ENCODE measurements at regions of chr11 and their contacts with region 1.

Region 1: GRCh38 chr11:118002541-118003423 is 16.6 kb downstream of the IL10RA start:
- DNase-seq: peak in 10 of 14 experiments; percentile 29 to 70 (median 48)
- ATAC-seq: peak; percentile 48
- H3K4me3 ChIP-seq: peak overlapping the region; percentile 10
- H3K4me3 Mint-ChIP-seq: peak overlapping the region; percentile 82
- H3K27ac ChIP-seq: peak overlapping the region; percentile 72 to 76
- H3K27ac Mint-ChIP-seq: peak overlapping the region; percentile 84
- H3K4me1 ChIP-seq: peaks cover 99% of the 10 kb centered on the region
- H3K4me1 Mint-ChIP-seq: peaks cover 92% of the 10 kb centered on the region
- H3K27me3 ChIP-seq: no peaks in the 10 kb centered on the region
- H3K27me3 Mint-ChIP-seq: no peaks in the 10 kb centered on the region
- CTCF ChIP-seq: no peak

Region 2: DNA sequence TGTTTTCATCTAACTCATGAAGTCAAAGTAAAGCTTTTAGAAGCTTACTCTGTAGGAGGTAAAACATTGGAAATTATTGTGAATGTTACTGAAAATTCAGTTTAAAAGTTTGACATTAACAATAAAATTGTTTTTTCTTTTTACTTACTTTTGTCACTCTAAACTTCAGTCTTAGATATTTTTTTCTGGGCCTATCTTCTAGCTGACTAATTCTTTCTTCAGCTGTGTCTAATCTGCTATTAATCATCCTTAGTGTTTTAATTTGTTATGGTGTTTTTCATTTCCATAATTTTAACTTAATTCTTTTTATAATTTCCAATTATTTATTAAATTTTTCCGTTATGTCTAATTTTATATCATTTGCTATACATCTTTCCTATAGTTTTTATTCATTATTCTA is 18.4 kb after region 1 on chr11:
- CTCF ChIA-PET with region 1: interaction called, 3 read pairs
- POLR2A ChIA-PET with region 1: interaction called, 10 read pairs
- intact Hi-C with region 1: no loop called
- DNase-seq: no peak
- ATAC-seq: no peak
- H3K4me3 ChIP-seq: no peak overlapping the region
- H3K4me3 Mint-ChIP-seq: no peak overlapping the region
- H3K27ac ChIP-seq: no peak overlapping the region
- H3K27ac Mint-ChIP-seq: no peak overlapping the region
- H3K4me1 ChIP-seq: peaks cover 9% of the 10 kb centered on the region
- H3K4me1 Mint-ChIP-seq: peaks cover 19% of the 10 kb centered on the region
- H3K27me3 ChIP-seq: no peaks in the 10 kb centered on the region
- H3K27me3 Mint-ChIP-seq: no peaks in the 10 kb centered on the region
- CTCF ChIP-seq: no peak

Region 3: DNA sequence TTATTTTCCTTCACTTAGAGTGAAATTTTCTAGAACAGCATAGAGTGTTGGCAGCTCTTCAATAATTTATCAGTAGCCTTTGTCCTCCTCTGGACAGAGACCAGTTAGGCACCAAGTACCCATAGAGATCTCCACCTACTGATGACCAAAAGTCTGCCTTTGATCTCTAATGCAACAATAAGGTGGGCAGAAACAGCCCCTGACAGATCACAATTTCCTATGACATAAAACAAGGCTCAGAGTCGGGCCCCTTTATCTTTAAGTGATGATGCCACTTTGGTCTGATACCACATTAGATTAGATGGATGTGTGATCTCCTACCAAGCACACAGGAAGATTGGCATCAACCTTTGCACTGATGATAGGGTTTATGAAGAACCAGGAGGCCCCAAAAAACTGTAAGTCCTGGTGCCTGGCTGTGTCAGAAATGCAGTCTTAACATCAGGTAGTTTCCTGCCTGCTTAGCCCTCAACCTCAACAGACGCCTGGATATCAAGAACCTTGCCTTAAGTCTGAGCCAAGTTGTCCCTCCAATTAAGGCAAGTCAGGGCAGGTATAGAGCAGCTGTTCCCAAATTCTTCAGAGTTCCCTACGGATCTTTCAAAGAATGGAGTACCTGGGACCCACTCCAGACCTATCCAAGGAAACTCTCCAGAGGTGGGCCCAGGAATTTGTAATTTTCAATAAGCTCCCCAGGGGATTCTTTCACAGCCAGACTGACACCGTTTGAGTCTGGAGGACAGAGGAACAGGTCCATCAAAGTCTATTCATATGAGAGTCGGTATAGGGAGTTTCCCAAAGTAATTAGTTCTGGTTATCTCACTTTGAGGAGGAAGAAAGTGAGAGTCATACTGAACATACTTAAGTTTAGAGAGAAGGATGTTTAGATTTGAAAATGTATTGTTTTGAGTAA is 43.5 kb after region 1 on chr11:
- CTCF ChIA-PET with region 1: interaction called, 3 read pairs
- POLR2A ChIA-PET with region 1: interaction called, 132 read pairs
- intact Hi-C with region 1: loop called (anchors 2 to 5 kb)
- DNase-seq: peak in 11 of 14 experiments; percentile 25 to 84 (median 44)
- ATAC-seq: peak; percentile 83
- H3K4me3 ChIP-seq: no peak overlapping the region
- H3K4me3 Mint-ChIP-seq: peak overlapping the region; percentile 69
- H3K27ac ChIP-seq: peak overlapping the region; percentile 71 to 76
- H3K27ac Mint-ChIP-seq: peak overlapping the region; percentile 95
- H3K4me1 ChIP-seq: peaks cover 80% of the 10 kb centered on the region
- H3K4me1 Mint-ChIP-seq: peaks cover 93% of the 10 kb centered on the region
- H3K27me3 ChIP-seq: no peaks in the 10 kb centered on the region
- H3K27me3 Mint-ChIP-seq: no peaks in the 10 kb centered on the region
- CTCF ChIP-seq: no peak

Measured in CD4-positive, alpha-beta T cell (primary cell).